OCI-LY7 (cell line): ENCODE measurements at regions of chr2 and their contacts with region 1.

Region 1: DNA sequence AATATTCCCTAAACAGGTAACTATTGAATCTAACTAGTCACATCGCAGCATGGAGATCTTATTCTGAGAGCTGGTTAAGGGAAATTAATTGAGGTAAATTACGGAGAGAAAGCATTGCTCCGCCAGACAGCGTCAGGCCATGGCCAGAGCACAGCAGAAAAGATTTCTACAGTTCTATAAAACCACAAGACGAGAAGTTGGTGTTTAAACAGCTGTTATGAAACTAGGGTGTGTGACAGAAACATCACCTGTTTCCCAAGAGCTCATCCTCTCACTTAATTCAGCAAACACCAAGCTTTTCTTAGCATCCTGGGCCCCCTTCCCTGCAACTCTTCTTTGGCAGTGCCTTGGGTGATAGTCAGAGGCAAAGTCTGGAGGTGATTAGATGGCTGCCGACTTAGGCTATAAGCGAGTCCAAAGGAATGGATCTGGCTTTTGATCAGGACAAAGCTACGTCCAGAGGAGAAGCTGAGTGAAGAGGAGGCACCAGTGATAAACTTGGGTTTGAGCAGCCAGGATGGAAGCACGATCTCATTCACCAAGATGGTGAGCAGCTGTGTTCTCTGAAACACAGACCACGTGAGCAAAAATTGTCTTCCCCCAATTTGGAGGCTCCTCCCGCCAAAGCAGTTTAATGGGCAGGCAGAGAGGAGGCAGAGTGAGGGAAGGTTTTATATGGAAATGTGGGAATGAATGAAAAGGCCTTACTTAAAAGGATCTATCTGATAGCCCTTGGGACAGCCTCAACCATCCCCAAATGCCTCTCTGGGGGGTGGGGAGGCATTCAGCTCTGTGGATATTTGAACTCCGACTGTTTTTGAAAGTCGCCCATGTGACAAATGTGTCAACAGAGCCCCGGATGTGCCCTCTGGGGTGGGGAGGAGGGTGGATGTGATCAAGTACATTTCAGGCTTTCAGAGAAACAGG is 57.8 kb downstream of the PKDCC start:
- DNase-seq: peak; percentile 86
- H3K4me3 ChIP-seq: peak overlapping the region; percentile 53
- H3K27ac ChIP-seq: peak overlapping the region; percentile 81
- H3K4me1 ChIP-seq: peaks cover 54% of the 10 kb centered on the region
- CTCF ChIP-seq: no peak

Region 2: GRCh38 chr2:42117923-42118753 is 12.5 kb after region 1 on chr2:
- CTCF ChIA-PET with region 1: interaction called, 4 read pairs
- POLR2A ChIA-PET with region 1: interaction called, 13 read pairs
- intact Hi-C with region 1: no loop called
- DNase-seq: peak; percentile 80
- H3K4me3 ChIP-seq: peak overlapping the region; percentile 21
- H3K27ac ChIP-seq: peak overlapping the region; percentile 7
- H3K4me1 ChIP-seq: peaks cover 21% of the 10 kb centered on the region
- CTCF ChIP-seq: no peak

Region 3: GRCh38 chr2:42127425-42128424 is 22.1 kb after region 1 on chr2:
- CTCF ChIA-PET with region 1: interaction called, 9 read pairs
- POLR2A ChIA-PET with region 1: interaction called, 26 read pairs
- intact Hi-C with region 1: loop called (anchors 2 kb)
- DNase-seq: peak; percentile 63
- H3K4me3 ChIP-seq: peak overlapping the region; percentile 25
- H3K27ac ChIP-seq: peak overlapping the region; percentile 58
- H3K4me1 ChIP-seq: peaks cover 88% of the 10 kb centered on the region
- CTCF ChIP-seq: no peak

Region 4: DNA sequence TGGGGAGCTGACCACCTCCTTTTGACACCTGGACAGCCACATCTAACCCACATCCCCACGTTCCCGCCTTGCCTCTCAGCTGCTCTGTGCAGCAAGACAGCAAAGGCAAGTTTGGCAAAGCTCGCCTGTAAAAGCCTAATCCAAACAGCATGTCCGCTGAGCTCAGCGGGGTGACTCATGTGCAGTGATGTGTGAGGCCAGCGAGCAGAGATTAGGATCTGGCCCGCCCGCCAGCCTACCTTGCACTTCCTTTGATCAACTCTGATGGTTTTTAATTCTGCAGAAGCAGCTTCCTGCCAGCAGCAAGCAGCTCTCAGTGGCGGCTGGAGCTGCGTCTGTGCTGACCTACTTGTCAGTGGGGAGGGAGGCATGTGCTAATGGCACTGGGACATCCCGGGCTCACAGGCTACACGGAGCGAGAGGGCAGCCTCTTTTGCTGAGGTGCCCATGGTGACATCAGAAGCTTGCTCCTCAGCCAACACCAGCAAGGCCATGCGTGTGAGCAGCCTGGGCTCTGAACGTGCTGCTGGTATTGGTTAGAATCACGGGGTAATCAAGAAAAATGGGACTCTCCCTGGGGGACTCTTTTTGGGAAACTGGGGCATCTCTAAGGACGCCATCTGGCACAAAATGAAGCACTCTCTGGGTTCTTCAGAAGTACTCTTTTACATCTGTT is 27.5 kb after region 1 on chr2:
- CTCF ChIA-PET with region 1: interaction called, 9 read pairs
- POLR2A ChIA-PET with region 1: interaction called, 26 read pairs
- intact Hi-C with region 1: loop called (anchors 1 kb)
- DNase-seq: peak; percentile 92
- H3K4me3 ChIP-seq: peak overlapping the region; percentile 54
- H3K27ac ChIP-seq: peak overlapping the region; percentile 68
- H3K4me1 ChIP-seq: peaks cover 63% of the 10 kb centered on the region
- CTCF ChIP-seq: no peak

Region 5: GRCh38 chr2:42169100-42169873 is 63.7 kb after region 1 on chr2 and contains the start of gene EML4:
- CTCF ChIA-PET with region 1: no interaction called
- POLR2A ChIA-PET with region 1: interaction called, 12 read pairs
- intact Hi-C with region 1: loop called (anchors 1 kb)
- DNase-seq: peak; percentile 91
- H3K4me3 ChIP-seq: peak within 1 kb of the TSS; percentile 82
- H3K27ac ChIP-seq: peak within 1 kb of the TSS; percentile 59
- H3K4me1 ChIP-seq: peaks cover 34% of the 10 kb centered on the region
- CTCF ChIP-seq: no peak
- total RNA-seq, gene EML4: 36.6 and 37.1 TPM in 2 replicates